K562 (cell line): ENCODE measurements at regions of chr2 and their contacts with region 1.

Region 1: GRCh38 chr2:207769597-207770486 is at the start of gene FZD5:
- DNase-seq: peak; percentile 88 to 94 (median 92)
- ATAC-seq: peak; percentile 89
- H3K4me3 ChIP-seq: peak within 1 kb of the TSS; percentile 87
- H3K27ac ChIP-seq: peak within 1 kb of the TSS; percentile 92
- H3K4me1 ChIP-seq: peaks cover 23 to 54% of the 10 kb centered on the region in 2 experiments; a peak in 4 of 5 replicates
- H3K27me3 ChIP-seq: no peaks in the 10 kb centered on the region
- CTCF ChIP-seq: peak; percentile 30 to 71 (median 57); a peak in 4 of 6 replicates
- EP300 ChIP-seq: no peak
- POLR2A ChIP-seq: peak; percentile 66
- RAD21 ChIP-seq: peak; percentile 47 to 51
- polyA plus RNA-seq, gene FZD5: 3.7 to 7.7 TPM

Region 2: DNA sequence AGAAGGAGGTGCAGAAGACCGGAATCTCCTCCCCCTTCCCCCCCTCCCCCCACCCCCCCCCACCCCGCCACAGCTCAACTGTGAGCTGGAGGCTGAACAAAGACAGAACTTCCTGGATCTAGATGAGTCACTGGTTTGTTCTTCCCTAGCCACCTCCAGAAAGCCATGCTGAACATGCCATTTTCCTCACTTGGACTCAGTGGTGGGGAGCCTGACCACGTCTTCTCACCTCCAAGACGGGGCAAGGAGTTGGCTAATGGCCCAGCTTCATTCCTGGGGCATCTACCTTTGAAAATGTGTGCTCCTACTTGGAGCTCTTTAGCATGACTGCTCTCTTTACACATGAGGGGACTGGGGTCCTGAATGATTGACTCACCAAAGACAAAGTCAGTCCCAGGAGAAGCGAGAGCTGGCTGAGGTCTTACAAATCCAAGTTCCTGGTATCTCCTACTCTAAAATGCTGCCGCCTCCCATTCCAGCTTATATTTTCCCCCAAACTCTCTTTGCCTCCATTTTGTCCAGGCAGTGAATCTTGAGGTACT is 22.5 kb after region 1 on chr2:
- CTCF ChIA-PET with region 1: no interaction called
- POLR2A ChIA-PET with region 1: interaction called, 7 read pairs
- in situ Hi-C with region 1: no loop called
- intact Hi-C with region 1: loop called (anchors 2 kb)
- DNase-seq: peak; percentile 72 to 85 (median 74)
- ATAC-seq: peak; percentile 92
- H3K4me3 ChIP-seq: no peak overlapping the region
- H3K27ac ChIP-seq: peak overlapping the region; percentile 100
- H3K4me1 ChIP-seq: peaks cover 15 to 21% of the 10 kb centered on the region in 2 experiments; a peak in 4 of 5 replicates
- H3K27me3 ChIP-seq: no peaks in the 10 kb centered on the region
- CTCF ChIP-seq: no peak
- EP300 ChIP-seq: no peak
- POLR2A ChIP-seq: peak; percentile 67
- RAD21 ChIP-seq: no peak

Region 3: DNA sequence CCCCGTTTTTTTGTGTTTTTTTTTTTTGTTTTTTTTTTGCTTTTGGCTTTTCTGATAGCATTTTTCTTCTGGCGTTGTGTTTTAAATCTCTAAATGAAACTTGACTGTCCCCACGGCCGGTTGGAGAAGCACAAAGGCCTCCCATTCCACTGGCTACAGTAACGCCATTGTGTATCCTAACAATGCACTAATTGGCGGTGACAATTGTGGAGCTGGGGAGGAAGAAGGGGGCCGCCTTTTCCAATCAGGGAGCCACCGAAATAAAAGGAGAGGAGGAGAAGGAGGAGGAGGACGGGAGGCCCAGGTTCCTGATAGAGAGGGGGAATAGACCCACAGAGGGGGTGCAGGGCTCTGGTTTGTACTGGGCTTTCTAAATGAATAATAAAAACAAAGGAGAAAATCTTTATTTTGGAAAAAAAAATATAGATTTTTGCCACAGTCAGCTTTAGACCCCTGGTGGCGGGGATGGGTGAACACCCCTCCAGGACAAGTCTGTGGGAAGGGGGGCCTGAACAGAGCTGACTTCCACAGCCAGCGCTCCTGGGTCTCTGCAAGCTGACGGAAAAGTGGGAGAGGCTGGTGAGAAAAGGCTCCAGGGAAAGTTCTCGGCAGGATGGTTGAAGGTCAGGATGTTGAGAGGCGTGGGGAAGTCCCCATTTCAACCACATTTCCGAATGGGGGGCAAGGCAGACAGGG is 43.5 kb after region 1 on chr2:
- CTCF ChIA-PET with region 1: no interaction called
- POLR2A ChIA-PET with region 1: interaction called, 4 read pairs
- in situ Hi-C with region 1: no loop called
- intact Hi-C with region 1: loop called (anchors 5 kb)
- DNase-seq: peak in 2 of 4 experiments; percentile 47 to 54
- ATAC-seq: peak; percentile 68
- H3K4me3 ChIP-seq: no peak overlapping the region
- H3K27ac ChIP-seq: no peak overlapping the region
- H3K4me1 ChIP-seq: peaks cover 0 to 3% of the 10 kb centered on the region in 2 experiments; a peak in 3 of 5 replicates
- H3K27me3 ChIP-seq: no peaks in the 10 kb centered on the region
- CTCF ChIP-seq: peak in 2 of 3 experiments; percentile 13 to 30; a peak in 2 of 6 replicates
- EP300 ChIP-seq: no peak
- POLR2A ChIP-seq: no peak
- RAD21 ChIP-seq: no peak

Region 4: GRCh38 chr2:207828361-207829057 is 58.7 kb after region 1 on chr2:
- CTCF ChIA-PET with region 1: no interaction called
- POLR2A ChIA-PET with region 1: no interaction called
- in situ Hi-C with region 1: loop called (anchors 5 kb)
- intact Hi-C with region 1: no loop called
- DNase-seq: no peak
- ATAC-seq: peak; percentile 28; the same call in 2 of the 3 replicates
- H3K4me3 ChIP-seq: no peak overlapping the region
- H3K27ac ChIP-seq: no peak overlapping the region
- H3K4me1 ChIP-seq: peaks cover 9 to 11% of the 10 kb centered on the region in 2 experiments; a peak in 4 of 5 replicates
- H3K27me3 ChIP-seq: no peaks in the 10 kb centered on the region
- CTCF ChIP-seq: no peak
- EP300 ChIP-seq: no peak
- POLR2A ChIP-seq: no peak
- RAD21 ChIP-seq: no peak

Region 5: GRCh38 chr2:207974216-207974605 is 204.4 kb after region 1 on chr2:
- CTCF ChIA-PET with region 1: interaction called, 3 read pairs
- POLR2A ChIA-PET with region 1: no interaction called
- in situ Hi-C with region 1: no loop called
- intact Hi-C with region 1: loop called (anchors 5 kb)
- DNase-seq: no peak
- ATAC-seq: no peak
- H3K4me3 ChIP-seq: no peak overlapping the region
- H3K27ac ChIP-seq: no peak overlapping the region
- H3K4me1 ChIP-seq: peaks cover 0 to 2% of the 10 kb centered on the region in 2 experiments; a peak in 1 of 5 replicates
- H3K27me3 ChIP-seq: no peaks in the 10 kb centered on the region
- CTCF ChIP-seq: no peak
- EP300 ChIP-seq: no peak
- POLR2A ChIP-seq: no peak
- RAD21 ChIP-seq: no peak